A673 (cell line): ENCODE measurements at regions of chr5 and their contacts with region 1.

Region 1: GRCh38 chr5:60295423-60295822 is 401.9 kb upstream of the PDE4D start:
- DNase-seq: peak; percentile 61
- H3K4me3 ChIP-seq: no peak overlapping the region
- H3K27ac ChIP-seq: no peak overlapping the region
- H3K4me1 ChIP-seq: peaks cover 11% of the 10 kb centered on the region
- H3K27me3 ChIP-seq: peaks cover 68% of the 10 kb centered on the region
- CTCF ChIP-seq: peak; percentile 67

Region 2: GRCh38 chr5:60185231-60186099 is 110.0 kb before region 1 on chr5:
- CTCF ChIA-PET with region 1: no interaction called
- POLR2A ChIA-PET with region 1: no interaction called
- intact Hi-C with region 1: no loop called
- DNase-seq: peak; percentile 16
- H3K4me3 ChIP-seq: no peak overlapping the region
- H3K27ac ChIP-seq: no peak overlapping the region
- H3K4me1 ChIP-seq: no peaks in the 10 kb centered on the region
- H3K27me3 ChIP-seq: peaks cover 62% of the 10 kb centered on the region
- CTCF ChIP-seq: no peak

Region 3: GRCh38 chr5:60274747-60275146 is 20.7 kb before region 1 on chr5:
- CTCF ChIA-PET with region 1: no interaction called
- POLR2A ChIA-PET with region 1: no interaction called
- intact Hi-C with region 1: no loop called
- DNase-seq: no peak
- H3K4me3 ChIP-seq: no peak overlapping the region
- H3K27ac ChIP-seq: no peak overlapping the region
- H3K4me1 ChIP-seq: peaks cover 24% of the 10 kb centered on the region
- H3K27me3 ChIP-seq: no peaks in the 10 kb centered on the region
- CTCF ChIP-seq: no peak

Region 4: GRCh38 chr5:60366489-60366888 is 71.1 kb after region 1 on chr5:
- CTCF ChIA-PET with region 1: no interaction called
- POLR2A ChIA-PET with region 1: no interaction called
- intact Hi-C with region 1: no loop called
- DNase-seq: no peak
- H3K4me3 ChIP-seq: no peak overlapping the region
- H3K27ac ChIP-seq: no peak overlapping the region
- H3K4me1 ChIP-seq: no peaks in the 10 kb centered on the region
- H3K27me3 ChIP-seq: peaks cover 25% of the 10 kb centered on the region
- CTCF ChIP-seq: no peak

Region 5: GRCh38 chr5:60382716-60383115 is 87.3 kb after region 1 on chr5:
- CTCF ChIA-PET with region 1: no interaction called
- POLR2A ChIA-PET with region 1: no interaction called
- intact Hi-C with region 1: loop called (anchors 5 kb)
- DNase-seq: peak; percentile 45
- H3K4me3 ChIP-seq: no peak overlapping the region
- H3K27ac ChIP-seq: no peak overlapping the region
- H3K4me1 ChIP-seq: no peaks in the 10 kb centered on the region
- H3K27me3 ChIP-seq: peaks cover 67% of the 10 kb centered on the region
- CTCF ChIP-seq: peak; percentile 55

Region 6: GRCh38 chr5:60649283-60649917 is 354.0 kb after region 1 on chr5:
- CTCF ChIA-PET with region 1: no interaction called
- POLR2A ChIA-PET with region 1: no interaction called
- intact Hi-C with region 1: loop called (anchors 5 kb)
- DNase-seq: peak; percentile 48
- H3K4me3 ChIP-seq: no peak overlapping the region
- H3K27ac ChIP-seq: no peak overlapping the region
- H3K4me1 ChIP-seq: no peaks in the 10 kb centered on the region
- H3K27me3 ChIP-seq: no peaks in the 10 kb centered on the region
- CTCF ChIP-seq: peak; percentile 73

Region 7: DNA sequence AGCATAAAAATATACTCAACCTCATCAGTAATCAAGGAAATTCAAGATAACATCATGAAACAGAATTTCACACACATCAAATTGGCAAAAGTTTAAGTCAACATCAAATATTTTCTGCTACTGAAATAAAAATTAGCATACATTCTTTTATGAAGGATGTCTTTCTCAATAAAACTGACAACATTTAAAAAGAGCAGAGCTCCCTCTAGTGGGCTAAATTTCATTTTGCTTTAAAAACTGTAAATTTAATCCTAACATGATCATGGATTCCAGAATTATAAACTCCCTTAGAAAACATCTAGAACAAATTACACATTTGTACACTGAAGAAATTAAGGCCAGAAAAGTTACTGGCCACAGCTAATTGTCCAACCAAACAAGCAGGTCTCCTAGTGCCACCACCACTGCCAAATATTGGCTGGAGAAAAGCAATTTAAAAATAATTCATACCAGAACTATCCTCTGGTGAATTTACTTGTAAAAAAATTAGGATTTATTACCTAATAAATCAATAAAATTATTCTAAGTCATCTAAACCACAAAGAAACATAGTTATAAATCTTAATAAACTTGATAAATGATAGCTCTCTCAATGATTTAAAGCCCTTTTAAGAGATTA is 373.4 kb after region 1 on chr5:
- CTCF ChIA-PET with region 1: no interaction called
- POLR2A ChIA-PET with region 1: no interaction called
- intact Hi-C with region 1: loop called (anchors 5 kb)
- DNase-seq: peak; percentile 65
- H3K4me3 ChIP-seq: no peak overlapping the region
- H3K27ac ChIP-seq: no peak overlapping the region
- H3K4me1 ChIP-seq: peaks cover 13% of the 10 kb centered on the region
- H3K27me3 ChIP-seq: no peaks in the 10 kb centered on the region
- CTCF ChIP-seq: peak; percentile 76